ENCODE measurements at regions of chr3 and their contacts with region 1.

Region 1: DNA sequence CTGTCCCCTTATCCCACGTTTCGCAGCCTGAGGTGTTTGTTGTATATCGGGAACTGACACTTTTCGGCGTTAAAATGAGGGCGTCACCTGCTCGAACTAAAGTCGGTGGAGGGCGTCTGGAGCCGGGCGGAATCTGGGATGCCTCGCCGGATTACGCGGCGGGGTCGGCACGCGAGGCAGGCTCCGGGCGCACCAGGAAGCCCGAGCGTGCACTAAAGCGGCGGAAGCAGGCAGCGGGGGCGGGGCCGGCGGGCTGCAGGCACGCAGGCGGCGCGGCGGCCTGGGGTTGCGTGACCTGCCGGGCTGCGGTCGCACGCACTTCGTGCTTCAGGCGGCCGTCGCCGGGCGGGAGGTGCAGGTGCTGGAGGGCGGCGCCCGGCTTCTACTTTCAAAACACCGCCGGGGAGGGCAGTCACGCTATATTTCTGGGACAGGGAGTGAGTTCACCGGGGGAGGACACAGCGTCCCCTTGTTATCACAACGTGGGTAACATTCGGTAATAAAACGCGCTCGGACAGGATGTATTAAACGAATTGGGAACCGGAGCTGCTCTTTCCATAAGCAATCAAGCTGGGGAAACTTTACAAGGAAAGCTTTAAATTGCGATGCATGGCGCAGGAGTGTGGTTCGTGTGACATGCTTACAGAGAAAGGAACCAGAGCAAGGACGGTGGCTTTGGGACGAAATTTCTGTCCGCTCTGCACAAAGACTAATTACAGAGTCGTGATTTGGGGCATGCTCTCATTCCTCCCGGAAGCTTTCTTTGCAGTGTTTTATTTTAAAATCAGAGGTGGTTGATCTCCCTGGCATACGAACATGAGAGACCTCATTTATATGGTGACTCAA is 9.1 kb upstream of the LEKR1 start:
- DNase-seq: peak; percentile 94
- H3K4me3 Mint-ChIP-seq: peak overlapping the region; percentile 84
- H3K27ac Mint-ChIP-seq: peak overlapping the region; percentile 95
- H3K4me1 Mint-ChIP-seq: peaks cover 67% of the 10 kb centered on the region
- H3K27me3 Mint-ChIP-seq: no peaks in the 10 kb centered on the region

Region 2: DNA sequence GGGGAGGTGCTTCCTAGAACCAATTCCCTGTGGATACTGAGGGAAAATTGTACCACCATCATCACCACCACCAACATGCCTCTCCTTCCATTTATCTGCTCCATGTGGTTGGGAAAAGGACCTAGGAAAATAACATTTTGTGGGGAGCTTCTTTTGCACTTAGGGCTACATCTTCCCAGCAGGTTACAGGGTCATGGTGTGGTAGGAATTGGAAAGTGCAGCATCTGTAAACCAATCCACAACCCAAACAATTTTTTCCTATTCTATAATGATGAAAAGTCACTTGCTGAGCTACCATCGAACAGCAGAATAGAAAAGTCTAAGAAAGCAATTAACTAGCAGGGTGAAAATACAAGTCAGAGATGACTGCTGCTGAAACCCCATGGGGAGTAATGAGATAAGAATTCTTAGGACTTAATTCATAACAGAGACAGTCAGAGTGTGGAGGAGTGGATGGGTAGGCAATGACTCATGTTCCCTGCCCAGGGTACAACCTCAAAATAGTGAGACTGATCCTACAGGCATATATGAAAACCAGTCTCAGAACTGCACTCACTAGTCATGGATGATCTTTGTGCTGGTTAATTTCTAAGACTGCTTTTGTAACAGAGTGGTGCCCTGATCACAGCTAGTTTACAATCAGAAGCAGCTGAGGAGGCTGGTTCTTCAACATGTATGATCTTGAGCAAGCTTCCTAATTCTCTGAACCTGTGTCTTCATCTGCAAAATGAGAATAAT is 28.9 kb before region 1 on chr3:
- intact Hi-C with region 1: loop called (anchors 1 kb)
- DNase-seq: no peak
- H3K4me3 Mint-ChIP-seq: no peak overlapping the region
- H3K27ac Mint-ChIP-seq: peak overlapping the region; percentile 40
- H3K4me1 Mint-ChIP-seq: peaks cover 55% of the 10 kb centered on the region
- H3K27me3 Mint-ChIP-seq: no peaks in the 10 kb centered on the region

Region 3: GRCh38 chr3:156859578-156859977 is 42.6 kb after region 1 on chr3:
- intact Hi-C with region 1: no loop called
- DNase-seq: no peak
- H3K4me3 Mint-ChIP-seq: no peak overlapping the region
- H3K27ac Mint-ChIP-seq: no peak overlapping the region
- H3K4me1 Mint-ChIP-seq: no peaks in the 10 kb centered on the region
- H3K27me3 Mint-ChIP-seq: peaks cover 7% of the 10 kb centered on the region

Region 4: GRCh38 chr3:157159762-157160657 is 343.0 kb after region 1 on chr3 and contains the start of gene CCNL1:
- intact Hi-C with region 1: loop called (anchors 5 kb)
- DNase-seq: peak; percentile 95
- H3K4me3 Mint-ChIP-seq: peak within 1 kb of the TSS; percentile 99
- H3K27ac Mint-ChIP-seq: peak within 1 kb of the TSS; percentile 98
- H3K4me1 Mint-ChIP-seq: peaks cover 52% of the 10 kb centered on the region
- H3K27me3 Mint-ChIP-seq: no peaks in the 10 kb centered on the region
- total RNA-seq, gene CCNL1: 160 and 167 TPM in 2 replicates